A673 (cell line): ENCODE measurements at regions of chr1 and their contacts with region 1.

Region 1: GRCh38 chr1:245156081-245156735 is 1.4 kb downstream of the KIF26B start:
- DNase-seq: peak; percentile 84
- H3K4me3 ChIP-seq: peak overlapping the region; percentile 42
- H3K27ac ChIP-seq: no peak overlapping the region
- H3K4me1 ChIP-seq: peaks cover 36% of the 10 kb centered on the region
- H3K27me3 ChIP-seq: peaks cover 94% of the 10 kb centered on the region
- CTCF ChIP-seq: peak; percentile 63

Region 2: DNA sequence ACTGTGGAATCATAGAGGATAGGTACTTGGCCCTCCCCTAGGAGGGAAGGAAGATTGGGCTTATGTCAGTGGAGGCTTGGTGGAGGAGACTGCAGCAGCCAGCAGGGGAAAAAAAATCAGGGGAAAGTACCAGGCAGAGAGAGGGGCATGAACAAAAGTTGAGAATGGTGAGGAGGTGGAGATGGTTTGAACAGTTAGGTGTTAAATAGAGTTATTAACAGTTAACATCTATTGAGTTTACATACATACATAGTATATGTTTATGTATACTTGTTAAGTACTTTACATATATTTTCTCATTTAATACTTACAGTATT is 155.4 kb before region 1 on chr1:
- CTCF ChIA-PET with region 1: no interaction called
- POLR2A ChIA-PET with region 1: no interaction called
- intact Hi-C with region 1: no loop called
- DNase-seq: no peak
- H3K4me3 ChIP-seq: no peak overlapping the region
- H3K27ac ChIP-seq: no peak overlapping the region
- H3K4me1 ChIP-seq: no peaks in the 10 kb centered on the region
- H3K27me3 ChIP-seq: no peaks in the 10 kb centered on the region
- CTCF ChIP-seq: no peak

Region 3: GRCh38 chr1:245380790-245381535 is 224.8 kb after region 1 on chr1:
- CTCF ChIA-PET with region 1: interaction called, 9 read pairs
- POLR2A ChIA-PET with region 1: no interaction called
- intact Hi-C with region 1: loop called (anchors 2 kb)
- DNase-seq: no peak
- H3K4me3 ChIP-seq: no peak overlapping the region
- H3K27ac ChIP-seq: no peak overlapping the region
- H3K4me1 ChIP-seq: no peaks in the 10 kb centered on the region
- H3K27me3 ChIP-seq: peaks cover 28% of the 10 kb centered on the region
- CTCF ChIP-seq: peak; percentile 52

Region 4: DNA sequence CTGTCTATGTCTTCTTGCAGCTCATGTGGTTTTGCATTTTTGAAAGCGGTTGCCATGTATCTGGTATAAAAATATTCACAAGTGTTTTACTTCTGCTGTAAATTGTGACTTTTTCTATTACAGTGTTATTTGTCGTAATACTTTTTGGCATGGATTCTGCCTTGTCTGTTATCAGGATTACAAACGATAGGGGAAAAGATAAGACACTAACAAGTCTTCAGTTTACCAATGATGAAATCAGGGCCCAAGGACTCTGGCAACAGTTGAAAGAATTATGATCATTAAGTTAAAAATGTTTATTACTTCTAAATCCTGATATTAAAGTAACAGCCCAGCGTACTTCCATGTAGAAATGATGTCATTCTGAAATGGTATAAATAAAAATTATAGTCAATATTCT is 297.3 kb after region 1 on chr1:
- CTCF ChIA-PET with region 1: no interaction called
- POLR2A ChIA-PET with region 1: no interaction called
- intact Hi-C with region 1: no loop called
- DNase-seq: no peak
- H3K4me3 ChIP-seq: no peak overlapping the region
- H3K27ac ChIP-seq: no peak overlapping the region
- H3K4me1 ChIP-seq: no peaks in the 10 kb centered on the region
- H3K27me3 ChIP-seq: peaks cover 59% of the 10 kb centered on the region
- CTCF ChIP-seq: no peak

Region 5: GRCh38 chr1:245687594-245688535 is 531.7 kb after region 1 on chr1:
- CTCF ChIA-PET with region 1: no interaction called
- POLR2A ChIA-PET with region 1: no interaction called
- intact Hi-C with region 1: loop called (anchors 10 kb)
- DNase-seq: no peak
- H3K4me3 ChIP-seq: no peak overlapping the region
- H3K27ac ChIP-seq: no peak overlapping the region
- H3K4me1 ChIP-seq: no peaks in the 10 kb centered on the region
- H3K27me3 ChIP-seq: peaks cover 19% of the 10 kb centered on the region
- CTCF ChIP-seq: no peak

Region 6: DNA sequence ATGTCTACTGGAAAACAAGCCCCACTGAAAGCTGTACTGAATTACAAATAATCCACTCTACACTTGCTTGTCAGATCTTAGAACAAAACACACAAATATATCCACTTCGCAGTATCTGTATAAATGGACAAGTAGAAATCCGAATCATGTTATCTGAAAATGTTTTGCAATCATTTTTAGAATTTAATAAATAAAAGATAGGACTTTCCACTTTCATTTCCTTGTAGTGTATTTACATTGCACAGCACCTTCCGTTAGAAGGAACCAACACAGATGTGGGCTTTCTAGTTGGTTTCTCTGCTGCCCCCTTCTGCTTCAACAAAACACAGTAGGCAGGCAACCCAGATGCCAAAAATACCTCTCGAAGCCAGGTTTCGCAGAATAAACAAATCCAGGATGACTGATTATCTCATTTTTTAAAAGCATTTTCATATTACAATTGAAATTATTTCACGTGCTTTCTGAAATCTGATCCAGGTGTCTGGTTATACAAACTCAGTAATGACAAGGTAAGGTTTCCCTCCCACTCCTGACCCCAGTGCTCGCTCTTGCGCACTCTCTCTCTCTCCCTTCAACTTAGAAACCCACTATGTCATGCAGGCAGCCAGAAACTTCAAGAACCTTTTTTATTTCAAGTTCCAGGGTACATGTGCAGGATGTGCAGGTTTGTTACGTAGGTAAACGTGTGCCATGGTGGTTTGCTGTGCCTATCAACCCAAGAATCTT is 961.0 kb after region 1 on chr1:
- CTCF ChIA-PET with region 1: no interaction called
- POLR2A ChIA-PET with region 1: no interaction called
- intact Hi-C with region 1: loop called (anchors 10 kb)
- DNase-seq: peak; percentile 40
- H3K4me3 ChIP-seq: no peak overlapping the region
- H3K27ac ChIP-seq: no peak overlapping the region
- H3K4me1 ChIP-seq: no peaks in the 10 kb centered on the region
- H3K27me3 ChIP-seq: no peaks in the 10 kb centered on the region
- CTCF ChIP-seq: peak; percentile 49

Region 7: DNA sequence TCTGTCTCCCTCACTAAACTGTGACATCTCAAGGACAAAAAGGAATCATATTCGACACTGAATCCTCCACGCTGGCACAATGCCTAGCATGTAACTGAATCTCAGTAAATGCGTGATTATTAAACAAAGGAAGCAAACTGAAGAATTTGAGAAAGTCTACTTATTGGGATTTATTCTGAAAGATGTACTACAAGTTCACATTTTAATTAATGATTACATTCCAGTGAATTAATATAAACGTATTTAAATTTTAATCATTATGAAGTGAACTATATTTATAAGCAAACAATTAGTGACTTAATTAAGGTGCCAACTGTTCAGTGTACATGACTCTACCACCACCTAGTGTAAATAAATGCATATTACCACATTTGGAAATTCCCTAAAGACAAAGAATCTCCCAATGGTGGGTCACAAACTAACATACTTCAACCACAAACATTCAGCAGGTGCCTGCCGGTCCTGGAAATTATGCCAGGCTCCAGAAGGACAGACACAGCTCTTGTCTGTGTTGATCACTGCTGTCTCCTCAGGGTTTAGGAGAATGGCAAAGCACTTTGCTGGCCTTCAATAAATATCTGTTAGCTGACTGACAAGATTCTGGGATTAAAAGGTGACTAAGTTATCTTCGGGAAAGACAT is 1294.5 kb after region 1 on chr1:
- CTCF ChIA-PET with region 1: interaction called, 5 read pairs
- POLR2A ChIA-PET with region 1: no interaction called
- intact Hi-C with region 1: loop called (anchors 2 kb)
- DNase-seq: peak; percentile 42
- H3K4me3 ChIP-seq: no peak overlapping the region
- H3K27ac ChIP-seq: no peak overlapping the region
- H3K4me1 ChIP-seq: peaks cover 14% of the 10 kb centered on the region
- H3K27me3 ChIP-seq: no peaks in the 10 kb centered on the region
- CTCF ChIP-seq: peak; percentile 81